ENCODE measurements at regions of chr1 and their contacts with region 1.

Region 1: GRCh38 chr1:179002552-179003345 is 22.9 kb upstream of the FAM20B start:
- DNase-seq: peak; percentile 89

Region 2: DNA sequence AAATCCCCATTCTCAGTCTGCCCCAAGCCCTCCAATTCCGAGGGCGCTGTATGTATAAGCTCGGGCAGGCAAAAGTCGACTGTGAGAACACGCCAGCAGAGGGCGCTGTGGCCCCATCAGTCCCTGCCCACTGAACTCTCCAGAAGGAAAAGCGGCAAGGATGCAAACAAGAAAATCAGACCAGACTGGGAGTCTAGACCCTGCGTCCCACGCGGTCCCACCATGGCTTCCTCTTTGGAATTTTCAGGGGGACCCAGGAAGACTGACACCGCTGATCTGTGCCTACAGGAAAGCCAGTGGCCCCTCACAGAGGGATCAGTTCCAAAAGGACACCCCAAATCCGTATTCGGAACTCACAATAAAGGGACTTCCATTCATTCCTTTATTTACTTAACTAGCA is 470.4 kb before region 1 on chr1:
- intact Hi-C with region 1: loop called in 1 of 2 experiments (anchors 10 kb)
- DNase-seq: peak; percentile 94

Region 3: DNA sequence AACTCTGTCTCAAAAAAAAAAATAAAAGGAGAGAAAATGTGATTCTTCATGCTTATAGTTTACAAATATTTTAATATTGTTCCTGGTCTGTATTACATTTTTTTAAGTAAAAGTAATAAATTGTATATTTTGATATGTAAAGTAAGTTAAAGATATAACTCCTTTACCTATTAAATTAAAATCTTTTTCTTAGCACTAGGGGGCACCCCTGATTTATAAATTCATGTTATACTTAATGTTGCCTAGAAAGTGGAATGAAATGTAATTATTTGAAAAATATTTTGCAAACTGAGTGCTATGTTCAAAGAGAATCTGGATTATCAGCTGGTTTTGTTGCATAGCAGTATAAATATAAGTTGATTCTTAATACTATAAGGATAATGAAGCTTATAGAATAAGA is 228.5 kb before region 1 on chr1:
- intact Hi-C with region 1: loop called in 1 of 2 experiments (anchors 5 kb)
- DNase-seq: no peak

Region 4: DNA sequence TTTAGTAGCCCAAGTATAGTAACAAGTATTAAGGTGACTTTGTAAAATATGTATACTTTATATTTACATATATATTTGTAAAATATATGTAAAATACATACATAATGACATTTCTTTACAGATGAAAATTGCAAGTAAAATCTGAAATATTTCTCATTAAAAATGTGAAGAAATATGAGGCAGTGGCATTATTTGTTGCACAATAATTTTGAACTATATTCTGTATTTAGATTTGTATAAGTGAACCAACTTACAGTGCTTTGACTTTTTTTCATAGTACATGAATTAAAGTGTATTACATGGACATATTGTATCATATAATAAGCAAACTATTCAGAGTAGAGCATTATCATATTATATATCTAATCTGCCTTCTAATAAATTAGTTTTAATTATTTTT is 192.2 kb before region 1 on chr1:
- intact Hi-C with region 1: loop called (anchors 5 kb)
- DNase-seq: no peak

Region 5: DNA sequence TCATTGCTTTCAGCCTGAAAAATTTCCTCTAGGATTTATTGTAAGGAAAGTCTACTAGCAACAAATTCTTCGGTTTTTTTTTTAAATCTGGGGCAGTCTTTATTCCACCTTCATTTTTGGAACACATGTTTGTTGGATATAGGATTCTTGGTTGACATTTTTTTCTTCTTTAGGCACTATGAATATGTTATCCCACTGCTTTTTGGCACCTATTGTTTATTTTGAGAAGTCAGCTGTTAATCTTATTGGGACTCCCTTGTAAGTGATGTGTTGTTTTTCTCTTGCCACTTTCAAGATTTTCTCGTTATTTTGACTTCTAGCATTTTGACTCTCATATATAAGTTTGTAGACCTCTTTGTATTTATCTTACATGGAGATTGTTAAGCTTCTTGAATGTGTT is 473.7 kb after region 1 on chr1:
- intact Hi-C with region 1: no loop called
- DNase-seq: no peak

Measured in posterior vena cava (tissue), 2 donors.